Panc1 (cell line): ENCODE measurements at regions of chr9 and their contacts with region 1.

Region 1: GRCh38 chr9:7028591-7028990 is 270.8 kb downstream of the KDM4C start:
- DNase-seq: no peak
- ATAC-seq: no peak
- H3K4me3 ChIP-seq: no peak overlapping the region
- H3K27ac ChIP-seq: no peak overlapping the region
- H3K4me1 ChIP-seq: no peaks in the 10 kb centered on the region
- H3K27me3 ChIP-seq: no peaks in the 10 kb centered on the region
- CTCF ChIP-seq: no peak

Region 2: DNA sequence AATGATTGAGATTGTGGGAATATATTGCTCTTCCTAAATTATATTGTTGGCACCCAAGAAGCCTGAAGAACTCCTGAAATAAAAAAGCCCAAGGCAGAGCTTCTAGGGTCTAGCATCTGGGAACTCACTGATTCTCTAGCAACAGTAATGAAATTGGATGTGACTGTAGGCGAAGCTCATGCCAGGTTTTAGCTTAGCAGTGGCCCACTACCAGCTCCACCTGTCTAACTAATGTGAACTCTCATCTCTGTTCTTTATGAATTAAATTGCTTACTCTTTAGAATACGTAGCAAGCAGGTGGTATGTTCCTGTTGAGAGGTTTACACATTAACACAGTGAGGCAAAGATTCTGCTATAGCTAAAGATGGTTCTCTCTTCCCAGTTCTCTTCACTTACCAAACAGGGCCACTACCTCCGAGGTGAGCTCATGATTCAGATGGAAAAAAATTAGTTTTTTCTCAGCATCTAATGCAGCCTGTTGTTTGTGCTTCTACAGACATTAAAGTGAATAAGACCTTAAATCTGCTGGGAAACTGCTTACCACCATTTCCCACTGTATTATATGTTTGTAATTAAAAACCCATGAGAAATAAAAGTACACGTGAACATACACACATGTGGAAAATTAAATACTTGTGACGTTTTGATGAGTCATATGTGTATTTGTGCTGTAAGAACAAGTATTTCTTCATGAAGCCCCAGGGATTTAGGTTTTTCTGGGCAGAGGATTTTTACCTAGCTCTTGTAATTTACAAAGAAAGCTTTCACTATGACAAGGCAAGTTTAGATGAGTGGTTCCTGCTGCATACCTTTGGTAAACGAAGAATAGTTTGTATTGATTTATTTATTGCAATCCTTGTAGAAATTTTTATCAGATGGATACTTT is 89.3 kb after region 1 on chr9:
- CTCF ChIA-PET with region 1: no interaction called
- POLR2A ChIA-PET with region 1: no interaction called
- in situ Hi-C with region 1: no loop called
- intact Hi-C with region 1: no loop called
- DNase-seq: no peak
- ATAC-seq: no peak
- H3K4me3 ChIP-seq: no peak overlapping the region
- H3K27ac ChIP-seq: no peak overlapping the region
- H3K4me1 ChIP-seq: no peaks in the 10 kb centered on the region
- H3K27me3 ChIP-seq: no peaks in the 10 kb centered on the region
- CTCF ChIP-seq: no peak

Region 3: DNA sequence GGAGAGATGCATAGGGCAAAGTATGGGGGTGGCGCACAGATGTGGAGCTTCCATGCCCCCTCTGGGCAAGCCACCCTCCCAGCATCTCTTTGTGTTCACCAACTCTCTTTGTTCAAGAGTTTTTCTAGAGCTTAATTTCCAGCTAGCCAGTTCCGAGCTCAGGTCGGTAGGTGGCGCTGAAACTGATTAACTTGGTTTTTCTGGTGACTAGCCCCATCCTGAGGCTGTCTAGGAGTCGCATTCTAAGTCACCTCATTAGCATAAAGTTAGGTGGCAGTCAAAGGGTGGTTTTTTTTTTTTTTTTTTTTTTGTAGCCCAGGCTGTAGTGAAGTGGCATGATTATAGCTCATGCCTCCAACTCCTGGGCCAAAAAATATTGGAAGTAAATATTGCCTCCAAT is 205.6 kb after region 1 on chr9:
- CTCF ChIA-PET with region 1: interaction called, 14 read pairs
- POLR2A ChIA-PET with region 1: no interaction called
- in situ Hi-C with region 1: no loop called
- intact Hi-C with region 1: no loop called
- DNase-seq: no peak
- ATAC-seq: no peak
- H3K4me3 ChIP-seq: no peak overlapping the region
- H3K27ac ChIP-seq: no peak overlapping the region
- H3K4me1 ChIP-seq: no peaks in the 10 kb centered on the region
- H3K27me3 ChIP-seq: no peaks in the 10 kb centered on the region
- CTCF ChIP-seq: peak; percentile 52

Region 4: GRCh38 chr9:7259544-7260241 is 231.1 kb after region 1 on chr9:
- CTCF ChIA-PET with region 1: no interaction called
- POLR2A ChIA-PET with region 1: no interaction called
- in situ Hi-C with region 1: no loop called
- intact Hi-C with region 1: no loop called
- DNase-seq: no peak
- ATAC-seq: no peak
- H3K4me3 ChIP-seq: no peak overlapping the region
- H3K27ac ChIP-seq: no peak overlapping the region
- H3K4me1 ChIP-seq: no peaks in the 10 kb centered on the region
- H3K27me3 ChIP-seq: no peaks in the 10 kb centered on the region
- CTCF ChIP-seq: no peak